ENCODE measurements at regions of chr2 and their contacts with region 1.

Region 1: GRCh38 chr2:85288244-85288725 is 39.5 kb downstream of the TGOLN2 start:
- DNase-seq: peak; percentile 62 to 99
- H3K4me3 ChIP-seq: peak overlapping the region; percentile 35; the same call in 1 of the 2 replicates
- H3K27ac ChIP-seq: peak overlapping the region; percentile 96
- H3K4me1 ChIP-seq: peaks cover 37% of the 10 kb centered on the region
- H3K27me3 ChIP-seq: no peaks in the 10 kb centered on the region
- CTCF ChIP-seq: no peak

Region 2: GRCh38 chr2:85066874-85067351 is 221.4 kb before region 1 on chr2:
- CTCF ChIA-PET with region 1: interaction called, 12 read pairs
- POLR2A ChIA-PET with region 1: interaction called, 7 read pairs
- intact Hi-C with region 1: loop called (anchors 1 kb)
- DNase-seq: peak; percentile 50 to 68
- H3K4me3 ChIP-seq: no peak overlapping the region
- H3K27ac ChIP-seq: no peak overlapping the region
- H3K4me1 ChIP-seq: no peaks in the 10 kb centered on the region
- H3K27me3 ChIP-seq: peaks cover 3% of the 10 kb centered on the region; the same call in 1 of the 2 replicates
- CTCF ChIP-seq: peak; percentile 93

Region 3: DNA sequence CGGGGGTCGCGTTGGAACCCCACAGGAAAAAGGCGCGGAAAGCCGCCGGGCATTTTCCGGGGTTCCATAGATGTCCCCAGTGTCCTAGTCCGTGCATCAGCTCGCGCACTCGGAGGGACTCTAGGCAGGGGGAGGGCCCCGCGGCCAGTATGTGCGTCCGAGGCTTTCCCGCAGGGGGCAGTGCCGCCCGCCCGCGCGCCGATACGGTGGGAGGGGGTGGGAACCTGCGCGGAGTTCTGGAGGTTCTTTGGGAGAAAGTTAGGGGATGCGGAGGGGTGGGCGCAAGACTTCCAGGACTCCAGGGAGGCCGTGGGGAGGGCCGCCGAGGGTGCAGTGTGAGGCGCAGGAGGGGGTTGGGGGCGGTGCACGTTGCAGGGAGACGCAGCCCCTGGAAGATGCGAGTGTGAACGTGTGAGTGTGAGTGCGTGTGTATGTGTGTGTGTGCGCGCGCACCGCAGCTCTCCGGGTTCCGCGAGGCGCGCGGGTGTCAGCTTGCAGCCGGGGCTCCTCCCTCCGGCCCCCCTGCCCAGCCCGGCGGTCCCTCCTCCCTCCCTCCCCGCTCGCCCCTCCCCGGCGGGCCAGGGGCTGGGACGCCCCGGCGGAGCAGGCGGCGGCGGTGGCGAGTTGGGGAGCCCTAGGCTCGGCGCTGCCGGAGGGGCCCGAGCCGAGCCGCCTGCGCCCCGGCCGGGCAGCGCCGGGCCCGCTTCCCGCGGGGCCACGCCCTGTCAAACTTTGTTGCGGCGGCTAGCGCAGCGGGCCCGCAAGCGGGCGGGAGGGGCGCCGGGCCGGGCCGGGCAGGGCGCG is 155.2 kb before region 1 on chr2 and contains the start of gene TCF7L1:
- CTCF ChIA-PET with region 1: no interaction called
- POLR2A ChIA-PET with region 1: no interaction called
- intact Hi-C with region 1: loop called (anchors 1 kb)
- DNase-seq: peak in 1 of 2 experiments; percentile 67
- H3K4me3 ChIP-seq: peak within 1 kb of the TSS; percentile 62
- H3K27ac ChIP-seq: no peak within 1 kb of the TSS
- H3K4me1 ChIP-seq: peaks cover 7% of the 10 kb centered on the region
- H3K27me3 ChIP-seq: no peaks in the 10 kb centered on the region
- CTCF ChIP-seq: peak; percentile 72
- total RNA-seq, gene TCF7L1: 2.3 and 2.8 TPM in 2 replicates

Region 4: GRCh38 chr2:85468704-85469349 is 180.5 kb after region 1 on chr2:
- CTCF ChIA-PET with region 1: no interaction called
- POLR2A ChIA-PET with region 1: no interaction called
- intact Hi-C with region 1: no loop called
- DNase-seq: peak; percentile 57 to 64
- H3K4me3 ChIP-seq: no peak overlapping the region
- H3K27ac ChIP-seq: no peak overlapping the region
- H3K4me1 ChIP-seq: peaks cover 16% of the 10 kb centered on the region
- H3K27me3 ChIP-seq: no peaks in the 10 kb centered on the region
- CTCF ChIP-seq: no peak